ENCODE measurements at regions of chr15 and their contacts with region 1.

Region 1: GRCh38 chr15:31488426-31489204 is 162.0 kb downstream of the KLF13 start:
- DNase-seq: peak; percentile 54
- H3K4me3 Mint-ChIP-seq: no peak overlapping the region
- H3K27ac Mint-ChIP-seq: peak overlapping the region; percentile 65
- H3K4me1 Mint-ChIP-seq: peaks cover 56% of the 10 kb centered on the region
- H3K27me3 Mint-ChIP-seq: peaks cover 3% of the 10 kb centered on the region

Region 2: DNA sequence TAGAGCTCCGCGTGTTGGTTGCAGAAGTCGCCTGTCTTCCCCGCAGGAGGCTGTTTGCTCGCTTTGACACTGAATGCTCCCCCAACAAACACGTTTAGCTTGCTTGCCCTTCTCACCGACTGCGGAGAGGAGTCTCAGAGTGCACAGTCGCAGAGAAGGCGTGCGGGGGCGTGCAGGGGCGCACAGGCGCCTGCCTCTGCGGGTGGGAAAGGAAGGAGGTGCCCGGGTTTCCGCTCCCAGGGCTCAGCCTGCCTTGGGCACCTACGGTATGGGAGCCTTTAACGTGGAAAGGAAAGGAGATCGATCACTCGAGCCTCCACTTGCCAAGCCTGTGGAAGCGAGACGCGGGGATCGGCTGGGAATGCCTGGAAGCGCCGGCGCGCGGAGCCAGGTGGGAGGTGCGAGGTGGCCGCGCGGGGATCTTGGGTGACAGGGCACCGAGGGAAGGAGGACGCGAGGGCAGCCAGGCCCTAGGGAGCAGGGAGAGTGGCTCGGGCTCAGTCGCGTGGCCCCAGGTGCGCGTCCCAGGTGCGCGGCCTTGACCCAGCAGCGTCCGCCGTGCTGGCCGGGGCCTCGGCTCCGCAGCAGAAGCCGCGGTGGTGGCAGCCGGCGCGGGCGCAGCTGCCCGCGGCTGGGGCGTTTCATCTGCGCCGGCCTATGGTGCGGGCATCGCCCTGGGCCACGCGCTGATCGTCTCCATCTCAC is 585.0 kb before region 1 on chr15 and contains the start of gene FAN1:
- CTCF ChIA-PET with region 1: interaction called, 5 read pairs
- POLR2A ChIA-PET with region 1: no interaction called
- intact Hi-C with region 1: loop called (anchors 10 kb)
- DNase-seq: peak; percentile 89
- H3K4me3 Mint-ChIP-seq: peak within 1 kb of the TSS; percentile 90
- H3K27ac Mint-ChIP-seq: peak within 1 kb of the TSS; percentile 56
- H3K4me1 Mint-ChIP-seq: peaks cover 23% of the 10 kb centered on the region
- H3K27me3 Mint-ChIP-seq: peaks cover 5% of the 10 kb centered on the region
- total RNA-seq, gene FAN1: 12.6 to 15.0 TPM

Region 3: GRCh38 chr15:31200735-31201151 is 287.9 kb before region 1 on chr15:
- CTCF ChIA-PET with region 1: interaction called, 44 read pairs
- POLR2A ChIA-PET with region 1: no interaction called
- intact Hi-C with region 1: loop called (anchors 1 kb)
- DNase-seq: peak; percentile 82
- H3K4me3 Mint-ChIP-seq: no peak overlapping the region
- H3K27ac Mint-ChIP-seq: no peak overlapping the region
- H3K4me1 Mint-ChIP-seq: peaks cover 20% of the 10 kb centered on the region
- H3K27me3 Mint-ChIP-seq: no peaks in the 10 kb centered on the region

Region 4: GRCh38 chr15:31254431-31255175 is 234.0 kb before region 1 on chr15:
- CTCF ChIA-PET with region 1: no interaction called
- POLR2A ChIA-PET with region 1: no interaction called
- intact Hi-C with region 1: no loop called
- DNase-seq: no peak
- H3K4me3 Mint-ChIP-seq: no peak overlapping the region
- H3K27ac Mint-ChIP-seq: no peak overlapping the region
- H3K4me1 Mint-ChIP-seq: peaks cover 9% of the 10 kb centered on the region
- H3K27me3 Mint-ChIP-seq: no peaks in the 10 kb centered on the region

Region 5: GRCh38 chr15:31326156-31326732 is 162.4 kb before region 1 on chr15:
- CTCF ChIA-PET with region 1: interaction called, 18 read pairs
- POLR2A ChIA-PET with region 1: interaction called, 3 read pairs
- intact Hi-C with region 1: loop called (anchors 1 kb)
- DNase-seq: peak; percentile 100
- H3K4me3 Mint-ChIP-seq: peak overlapping the region; percentile 88
- H3K27ac Mint-ChIP-seq: peak overlapping the region; percentile 80
- H3K4me1 Mint-ChIP-seq: peaks cover 32% of the 10 kb centered on the region
- H3K27me3 Mint-ChIP-seq: no peaks in the 10 kb centered on the region

Region 6: GRCh38 chr15:31365655-31366127 is 122.9 kb before region 1 on chr15:
- CTCF ChIA-PET with region 1: interaction called, 79 read pairs
- POLR2A ChIA-PET with region 1: interaction called, 5 read pairs
- intact Hi-C with region 1: loop called (anchors 2 kb)
- DNase-seq: peak; percentile 89
- H3K4me3 Mint-ChIP-seq: peak overlapping the region; percentile 61
- H3K27ac Mint-ChIP-seq: peak overlapping the region; percentile 97
- H3K4me1 Mint-ChIP-seq: peaks cover 99% of the 10 kb centered on the region
- H3K27me3 Mint-ChIP-seq: no peaks in the 10 kb centered on the region

Region 7: DNA sequence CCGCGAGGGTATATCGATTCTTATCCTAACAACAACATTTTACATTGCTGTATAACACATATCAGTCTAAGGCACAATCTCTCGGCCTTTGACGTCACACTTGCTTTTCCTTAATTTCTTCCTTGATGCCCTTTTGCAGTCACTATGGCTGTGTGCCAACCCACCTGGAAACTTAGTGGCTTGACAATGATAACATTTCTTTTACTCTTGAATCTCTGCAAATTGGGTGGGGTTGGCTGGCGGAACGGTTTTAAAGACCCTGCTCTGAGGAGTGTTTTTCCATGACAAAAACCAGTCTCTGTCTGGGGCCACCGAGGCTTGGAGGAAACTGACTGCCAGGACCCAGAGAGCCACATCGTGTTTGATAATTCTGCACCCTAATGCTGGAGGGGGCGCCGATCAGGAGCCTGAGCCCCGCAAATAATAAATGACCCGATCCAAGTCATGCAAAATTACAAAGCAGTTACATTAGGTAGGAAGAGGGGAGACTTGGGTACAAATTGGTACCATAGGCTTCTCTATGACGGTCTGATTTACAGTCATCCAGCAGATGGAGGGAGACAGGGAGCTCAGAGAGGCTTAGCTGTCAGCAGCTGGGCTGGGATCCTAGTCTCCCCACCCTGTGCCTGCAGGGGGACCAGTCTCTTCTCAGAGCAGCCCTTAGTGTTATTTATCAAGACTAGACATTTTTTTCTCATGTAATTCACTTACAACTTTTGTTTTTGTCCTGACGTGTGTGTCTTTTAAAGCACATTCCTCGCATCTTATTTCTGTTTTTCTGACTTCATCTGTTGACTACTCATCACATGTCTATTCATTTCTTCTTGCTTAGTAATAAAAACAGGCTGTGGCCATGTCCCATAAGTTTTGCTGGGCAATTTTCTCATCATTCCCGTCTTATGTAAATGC is 46.2 kb before region 1 on chr15:
- CTCF ChIA-PET with region 1: interaction called, 312 read pairs
- POLR2A ChIA-PET with region 1: interaction called, 36 read pairs
- intact Hi-C with region 1: loop called (anchors 1 kb)
- DNase-seq: peak; percentile 41
- H3K4me3 Mint-ChIP-seq: peak overlapping the region; percentile 72
- H3K27ac Mint-ChIP-seq: peak overlapping the region; percentile 43
- H3K4me1 Mint-ChIP-seq: peaks cover 53% of the 10 kb centered on the region
- H3K27me3 Mint-ChIP-seq: no peaks in the 10 kb centered on the region

Region 8: DNA sequence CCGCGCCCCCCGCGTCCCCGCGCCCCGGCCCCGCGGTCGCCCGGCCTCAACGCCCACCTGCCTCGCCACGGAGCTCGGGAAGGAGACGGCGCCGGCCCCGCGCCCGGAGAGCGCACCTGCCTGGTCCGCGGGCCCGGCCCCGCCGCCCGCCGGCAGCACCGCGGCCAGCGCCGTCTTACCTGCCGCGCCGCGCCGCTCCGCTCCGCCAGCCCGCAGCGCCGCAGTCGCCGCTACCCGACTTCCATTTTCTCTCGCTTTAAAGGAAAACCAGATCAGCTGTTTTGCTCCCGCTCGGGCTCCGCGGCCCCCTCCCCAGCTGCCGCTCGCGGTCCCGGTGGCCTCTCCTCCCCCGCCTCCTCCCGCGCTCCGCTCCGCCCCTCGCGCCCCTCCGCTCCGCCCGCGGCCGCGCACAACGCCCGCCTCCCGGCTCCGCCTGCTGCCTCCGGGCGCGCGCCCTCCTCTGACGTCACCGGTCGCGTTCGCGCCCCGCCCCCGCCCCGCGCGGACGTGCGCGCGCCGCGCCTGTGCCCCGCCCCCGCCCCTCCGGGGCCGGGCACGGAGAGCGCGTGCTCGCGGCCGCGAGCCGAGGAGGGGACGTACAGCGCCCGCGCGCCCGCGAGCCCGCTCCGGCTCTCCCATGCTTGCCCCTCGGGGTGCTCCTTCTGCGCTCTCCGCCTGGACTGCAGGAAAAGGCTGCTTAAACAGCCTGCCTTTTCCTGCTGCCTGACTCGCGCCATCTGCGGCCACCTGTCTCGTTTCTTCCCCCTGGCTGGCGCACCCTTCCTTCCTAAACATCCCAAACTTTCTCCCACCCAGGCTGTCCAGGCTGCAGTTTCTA is 381.9 kb after region 1 on chr15:
- CTCF ChIA-PET with region 1: no interaction called
- POLR2A ChIA-PET with region 1: no interaction called
- intact Hi-C with region 1: loop called (anchors 10 kb)
- DNase-seq: peak; percentile 84
- H3K4me3 Mint-ChIP-seq: peak within 1 kb of the TSS; percentile 88
- H3K27ac Mint-ChIP-seq: peak within 1 kb of the TSS; percentile 61
- H3K4me1 Mint-ChIP-seq: peaks cover 9% of the 10 kb centered on the region
- H3K27me3 Mint-ChIP-seq: peaks cover 6% of the 10 kb centered on the region

Measured in activated CD4-positive, alpha-beta memory T cell treated with anti-CD3 and anti-CD28 coated beads for 36 hours (primary cell).